CD4-positive, alpha-beta T cell (primary cell): ENCODE measurements at regions of chr4 and their contacts with region 1.

Region 1: GRCh38 chr4:102809190-102809589 is 18.2 kb downstream of the UBE2D3 start:
- DNase-seq: peak in 2 of 14 experiments; percentile 20 to 23
- ATAC-seq: peak; percentile 81
- H3K4me3 ChIP-seq: no peak overlapping the region
- H3K4me3 Mint-ChIP-seq: peak overlapping the region; percentile 28
- H3K27ac ChIP-seq: no peak overlapping the region
- H3K27ac Mint-ChIP-seq: peak overlapping the region; percentile 54
- H3K4me1 ChIP-seq: peaks cover 21% of the 10 kb centered on the region
- H3K4me1 Mint-ChIP-seq: peaks cover 89% of the 10 kb centered on the region
- H3K27me3 ChIP-seq: no peaks in the 10 kb centered on the region
- H3K27me3 Mint-ChIP-seq: no peaks in the 10 kb centered on the region
- CTCF ChIP-seq: no peak

Region 2: GRCh38 chr4:103008875-103009729 is 199.9 kb after region 1 on chr4:
- CTCF ChIA-PET with region 1: interaction called, 3 read pairs
- POLR2A ChIA-PET with region 1: no interaction called
- intact Hi-C with region 1: loop called in 1 of 2 experiments (anchors 5 kb)
- DNase-seq: peak in 4 of 14 experiments; percentile 33 to 84 (median 76)
- ATAC-seq: peak; percentile 96
- H3K4me3 ChIP-seq: no peak overlapping the region
- H3K4me3 Mint-ChIP-seq: no peak overlapping the region
- H3K27ac ChIP-seq: no peak overlapping the region
- H3K27ac Mint-ChIP-seq: no peak overlapping the region
- H3K4me1 ChIP-seq: no peaks in the 10 kb centered on the region
- H3K4me1 Mint-ChIP-seq: no peaks in the 10 kb centered on the region
- H3K27me3 ChIP-seq: no peaks in the 10 kb centered on the region
- H3K27me3 Mint-ChIP-seq: no peaks in the 10 kb centered on the region
- CTCF ChIP-seq: peak; percentile 77